ENCODE measurements at regions of chr15 and their contacts with region 1.

Region 1: GRCh38 chr15:35519541-35520149 is 26.3 kb downstream of the DPH6 start:
- DNase-seq: no peak
- H3K4me3 ChIP-seq: no peak overlapping the region
- H3K27ac ChIP-seq: no peak overlapping the region
- H3K4me1 ChIP-seq: no peaks in the 10 kb centered on the region
- H3K27me3 ChIP-seq: no peaks in the 10 kb centered on the region
- CTCF ChIP-seq: peak in 3 of 4 experiments; percentile 39 to 54 (median 47)
- EP300 ChIP-seq: no peak
- POLR2A ChIP-seq: no peak

Region 2: DNA sequence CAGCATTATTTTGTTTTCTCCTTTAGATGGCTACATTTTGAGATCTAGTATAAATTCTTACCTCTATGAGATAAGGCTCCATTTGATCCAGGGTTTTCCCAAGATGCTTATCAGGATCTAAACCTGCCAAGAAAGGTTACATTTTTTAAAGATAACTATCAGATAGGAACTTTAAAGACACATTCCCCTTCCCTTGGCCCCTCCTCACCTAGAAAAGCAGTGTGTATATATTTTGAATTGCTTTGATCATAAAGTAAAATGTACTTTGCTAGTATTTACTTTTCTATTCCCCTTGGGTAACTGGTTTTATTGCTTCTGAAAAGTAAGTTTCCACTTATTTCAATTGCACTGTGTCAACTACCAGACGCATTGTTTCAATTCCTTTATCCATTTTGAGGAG is 108.9 kb before region 1 on chr15:
- intact Hi-C with region 1: no loop called
- DNase-seq: no peak
- H3K4me3 ChIP-seq: no peak overlapping the region
- H3K27ac ChIP-seq: no peak overlapping the region
- H3K4me1 ChIP-seq: no peaks in the 10 kb centered on the region
- H3K27me3 ChIP-seq: no peaks in the 10 kb centered on the region
- CTCF ChIP-seq: no peak
- EP300 ChIP-seq: no peak
- POLR2A ChIP-seq: no peak

Region 3: DNA sequence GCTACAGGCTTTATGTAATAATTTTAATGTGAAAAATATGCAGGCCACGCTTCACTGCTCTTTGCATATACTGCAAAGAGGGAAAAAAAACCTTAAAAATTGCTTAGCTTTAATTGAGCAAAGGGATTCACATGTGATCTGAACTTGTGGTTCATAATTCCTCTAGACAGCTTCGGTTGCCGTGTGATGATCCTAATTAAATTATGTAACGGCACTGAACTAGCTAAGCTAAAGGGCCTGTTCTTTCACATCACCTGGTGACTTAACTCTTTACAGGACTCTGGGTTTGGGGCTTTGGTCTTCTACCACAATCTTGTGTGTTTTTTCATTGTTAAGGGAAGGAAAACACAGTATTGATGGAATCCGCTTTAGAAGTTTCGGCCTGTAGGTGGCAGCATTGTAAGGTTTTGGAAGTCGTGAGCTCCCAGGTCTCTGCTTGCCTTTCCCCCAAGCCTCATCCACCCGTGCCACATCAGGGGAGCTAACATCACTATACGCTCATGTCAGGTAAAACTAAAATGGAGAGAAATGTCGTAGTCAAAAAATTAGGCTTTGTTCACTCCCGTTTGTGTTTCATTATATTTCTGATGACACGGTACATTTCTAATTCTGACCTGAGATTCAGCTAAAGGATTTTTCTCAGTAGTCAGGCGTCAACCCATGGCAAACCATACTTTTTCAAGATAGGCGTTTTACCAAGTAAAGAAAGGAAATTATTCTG is 231.9 kb after region 1 on chr15:
- intact Hi-C with region 1: loop called (anchors 10 kb)
- DNase-seq: peak; percentile 84
- H3K4me3 ChIP-seq: no peak overlapping the region
- H3K27ac ChIP-seq: no peak overlapping the region
- H3K4me1 ChIP-seq: peaks cover 0 to 20% (median 0%) of the 10 kb centered on the region in 4 donors
- H3K27me3 ChIP-seq: no peaks in the 10 kb centered on the region
- CTCF ChIP-seq: peak; percentile 8 to 72 (median 48)
- EP300 ChIP-seq: no peak
- POLR2A ChIP-seq: no peak

Region 4: DNA sequence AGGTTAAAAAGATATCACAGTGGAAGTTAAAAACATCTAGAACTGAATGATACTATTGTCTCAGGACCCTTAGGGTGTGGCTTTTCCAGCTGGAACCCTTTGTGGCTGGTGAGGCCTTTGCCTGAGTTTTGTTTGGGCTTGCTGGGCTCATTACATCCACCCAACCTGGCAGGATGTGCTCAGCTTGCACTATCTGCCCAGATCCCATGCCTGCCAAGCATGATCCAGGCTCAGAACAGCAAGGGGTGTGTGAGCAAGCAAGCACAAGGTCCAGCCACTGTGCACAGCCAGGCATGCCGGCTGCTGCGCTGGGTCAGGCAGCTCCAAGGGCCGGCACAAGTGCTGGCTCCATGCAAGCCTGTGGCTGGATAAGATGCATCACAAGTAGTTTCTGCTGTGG is 547.1 kb after region 1 on chr15:
- intact Hi-C with region 1: no loop called
- DNase-seq: no peak
- H3K4me3 ChIP-seq: no peak overlapping the region
- H3K27ac ChIP-seq: no peak overlapping the region
- H3K4me1 ChIP-seq: no peaks in the 10 kb centered on the region
- H3K27me3 ChIP-seq: no peaks in the 10 kb centered on the region
- CTCF ChIP-seq: no peak
- EP300 ChIP-seq: no peak
- POLR2A ChIP-seq: no peak

Measured in sigmoid colon (tissue), 7 donors.